Naive thymus-derived CD4-positive, alpha-beta T cell (primary cell): ENCODE measurements at regions of chr3 and their contacts with region 1.

Region 1: DNA sequence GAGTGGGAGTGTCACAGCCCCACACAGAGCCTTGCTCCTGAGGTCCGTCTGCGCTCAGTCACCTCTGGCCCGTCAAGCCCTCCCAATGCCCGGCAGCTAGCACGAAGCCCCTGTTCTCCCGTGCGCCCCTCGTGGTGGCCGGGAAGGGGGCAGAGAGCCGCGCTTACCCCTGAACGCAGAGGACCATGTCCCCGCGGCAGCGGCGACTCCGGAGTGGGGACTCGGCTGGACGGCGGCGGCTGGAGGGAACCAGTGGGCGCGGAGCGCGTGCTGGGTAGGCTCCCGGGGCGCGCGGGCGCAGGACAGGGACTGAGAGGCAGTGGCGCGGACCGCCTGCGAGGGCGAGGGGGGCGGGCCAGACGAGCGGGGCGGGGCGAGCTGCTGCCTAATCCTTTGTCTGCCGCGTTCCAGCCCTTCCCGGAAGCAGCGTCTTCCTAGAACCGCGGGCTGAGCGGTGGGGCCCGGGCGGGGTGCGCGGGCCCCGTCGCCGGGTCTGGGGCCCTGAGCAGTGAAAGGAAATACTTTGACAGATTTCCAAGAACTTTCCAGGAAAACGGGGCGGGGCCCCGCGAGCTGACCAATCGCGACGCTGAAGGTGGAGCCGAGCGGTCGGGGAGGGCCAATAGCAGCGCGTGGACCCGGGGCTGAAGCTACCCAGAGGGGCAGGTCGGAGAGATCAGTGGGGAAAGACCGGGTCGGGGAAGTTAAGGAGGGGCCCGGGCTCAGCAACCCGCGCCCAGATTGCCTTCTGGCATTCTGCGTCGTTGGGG is at the start of gene CISH:
- DNase-seq: peak; percentile 86 to 98 (median 89)
- ATAC-seq: peak; percentile 77
- H3K4me3 ChIP-seq: peak within 1 kb of the TSS; percentile 93
- H3K4me3 Mint-ChIP-seq: peak within 1 kb of the TSS; percentile 83 to 98 (median 92)
- H3K27ac ChIP-seq: peak within 1 kb of the TSS; percentile 93
- H3K27ac Mint-ChIP-seq: peak within 1 kb of the TSS; percentile 89 to 96 (median 94)
- H3K4me1 ChIP-seq: peaks cover 55 to 56% of the 10 kb centered on the region in 2 donors
- H3K4me1 Mint-ChIP-seq: peaks cover 53 to 80% (median 64%) of the 10 kb centered on the region in 7 donors
- H3K27me3 ChIP-seq: no peaks in the 10 kb centered on the region
- H3K27me3 Mint-ChIP-seq: peaks cover 0 to 2% (median 0%) of the 10 kb centered on the region in 5 donors
- total RNA-seq, gene CISH: 10.9 to 486 (median 28.5) TPM

Region 2: GRCh38 chr3:50146316-50146901 is 465.2 kb before region 1 on chr3:
- CTCF ChIA-PET with region 1: no interaction called
- POLR2A ChIA-PET with region 1: no interaction called
- intact Hi-C with region 1: no loop called
- DNase-seq: no peak
- ATAC-seq: no peak
- H3K4me3 ChIP-seq: no peak overlapping the region
- H3K4me3 Mint-ChIP-seq: no peak overlapping the region
- H3K27ac ChIP-seq: no peak overlapping the region
- H3K27ac Mint-ChIP-seq: no peak overlapping the region
- H3K4me1 ChIP-seq: no peaks in the 10 kb centered on the region
- H3K4me1 Mint-ChIP-seq: no peaks in the 10 kb centered on the region
- H3K27me3 ChIP-seq: no peaks in the 10 kb centered on the region
- H3K27me3 Mint-ChIP-seq: peaks cover 0 to 8% (median 0%) of the 10 kb centered on the region in 5 donors

Region 3: DNA sequence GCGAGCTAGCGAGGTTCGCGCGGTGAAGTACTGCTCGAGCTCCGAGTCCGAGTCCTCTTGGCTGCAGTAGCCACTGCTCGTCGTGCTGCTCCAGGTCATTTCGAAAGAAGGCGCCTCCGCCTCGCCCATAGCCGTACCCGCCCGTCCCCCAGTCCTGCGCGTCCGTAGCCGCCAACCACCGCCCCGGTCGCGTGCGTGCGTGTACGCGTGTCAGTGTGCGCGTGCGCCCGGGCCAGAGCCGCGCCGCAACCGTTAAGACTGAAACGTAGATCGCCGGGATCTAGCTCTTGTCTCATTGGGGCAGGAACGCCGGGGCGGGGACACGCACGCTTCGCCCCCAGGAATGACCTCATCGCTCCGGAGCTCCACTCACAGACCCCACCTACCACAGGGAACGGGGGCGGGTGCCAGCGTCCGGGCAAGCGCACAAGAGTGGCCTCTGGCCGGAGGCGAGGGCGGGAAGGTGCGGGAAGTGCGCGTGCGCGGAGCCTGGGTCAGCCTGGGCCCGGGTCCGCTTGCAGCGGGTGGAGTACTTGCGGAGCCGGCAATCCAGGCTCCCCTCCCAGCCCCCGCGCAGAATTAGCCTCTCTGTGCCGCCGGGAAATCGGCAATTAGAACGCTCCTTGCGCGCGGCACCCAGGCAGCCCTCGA is 274.3 kb before region 1 on chr3:
- CTCF ChIA-PET with region 1: interaction called, 4 read pairs
- POLR2A ChIA-PET with region 1: interaction called, 3 read pairs
- intact Hi-C with region 1: loop called in 1 of 2 experiments (anchors 2 kb)
- DNase-seq: peak; percentile 83 to 98 (median 91)
- ATAC-seq: peak; percentile 88
- H3K4me3 ChIP-seq: peak overlapping the region; percentile 83
- H3K4me3 Mint-ChIP-seq: peak overlapping the region; percentile 92 to 97 (median 95)
- H3K27ac ChIP-seq: peak overlapping the region; percentile 92
- H3K27ac Mint-ChIP-seq: peak overlapping the region; percentile 92 to 97 (median 96)
- H3K4me1 ChIP-seq: peaks cover 43 to 58% of the 10 kb centered on the region in 2 donors
- H3K4me1 Mint-ChIP-seq: peaks cover 35 to 73% (median 68%) of the 10 kb centered on the region in 7 donors
- H3K27me3 ChIP-seq: no peaks in the 10 kb centered on the region
- H3K27me3 Mint-ChIP-seq: peaks cover 0 to 3% (median 0%) of the 10 kb centered on the region in 5 donors

Region 4: GRCh38 chr3:50503504-50504342 is 107.9 kb before region 1 on chr3 and contains the start of gene CACNA2D2:
- CTCF ChIA-PET with region 1: no interaction called
- POLR2A ChIA-PET with region 1: no interaction called
- intact Hi-C with region 1: loop called in 1 of 2 experiments (anchors 5 kb)
- DNase-seq: peak; percentile 54 to 79 (median 74)
- ATAC-seq: peak; percentile 94
- H3K4me3 ChIP-seq: peak within 1 kb of the TSS; percentile 44
- H3K4me3 Mint-ChIP-seq: peak within 1 kb of the TSS; percentile 37 to 85 (median 76)
- H3K27ac ChIP-seq: peak within 1 kb of the TSS; percentile 45
- H3K27ac Mint-ChIP-seq: peak within 1 kb of the TSS in 5 of 9 donors; percentile 19 to 71 (median 43)
- H3K4me1 ChIP-seq: peaks cover 0 to 5% of the 10 kb centered on the region in 2 donors
- H3K4me1 Mint-ChIP-seq: peaks cover 0 to 15% (median 10%) of the 10 kb centered on the region in 7 donors
- H3K27me3 ChIP-seq: peaks cover 0 to 5% of the 10 kb centered on the region in 2 donors
- H3K27me3 Mint-ChIP-seq: peaks cover 11 to 56% (median 21%) of the 10 kb centered on the region in 5 donors
- total RNA-seq, gene CACNA2D2: 0.97 to 6.2 (median 2.5) TPM

Region 5: GRCh38 chr3:50627407-50628051 is 15.9 kb after region 1 on chr3:
- CTCF ChIA-PET with region 1: interaction called, 14 read pairs
- POLR2A ChIA-PET with region 1: no interaction called
- intact Hi-C with region 1: loop called in 1 of 2 experiments (anchors 2 kb)
- DNase-seq: no peak
- ATAC-seq: peak; percentile 90
- H3K4me3 ChIP-seq: no peak overlapping the region
- H3K4me3 Mint-ChIP-seq: peak overlapping the region in 5 of 10 donors; percentile 19 to 45 (median 39)
- H3K27ac ChIP-seq: no peak overlapping the region
- H3K27ac Mint-ChIP-seq: peak overlapping the region in 8 of 9 donors; percentile 1 to 75 (median 64)
- H3K4me1 ChIP-seq: peaks cover 59 to 79% of the 10 kb centered on the region in 2 donors
- H3K4me1 Mint-ChIP-seq: peaks cover 74 to 100% (median 94%) of the 10 kb centered on the region in 7 donors
- H3K27me3 ChIP-seq: no peaks in the 10 kb centered on the region
- H3K27me3 Mint-ChIP-seq: no peaks in the 10 kb centered on the region

Region 6: GRCh38 chr3:51190199-51190839 is 578.7 kb after region 1 on chr3:
- CTCF ChIA-PET with region 1: no interaction called
- POLR2A ChIA-PET with region 1: no interaction called
- intact Hi-C with region 1: loop called in 1 of 2 experiments (anchors 1 kb)
- DNase-seq: peak in 4 of 9 donors; percentile 5 to 23 (median 8)
- ATAC-seq: no peak
- H3K4me3 ChIP-seq: no peak overlapping the region
- H3K4me3 Mint-ChIP-seq: no peak overlapping the region
- H3K27ac ChIP-seq: no peak overlapping the region
- H3K27ac Mint-ChIP-seq: peak overlapping the region in 1 of 9 donors; percentile 30
- H3K4me1 ChIP-seq: no peaks in the 10 kb centered on the region
- H3K4me1 Mint-ChIP-seq: peaks cover 6 to 45% (median 13%) of the 10 kb centered on the region in 7 donors
- H3K27me3 ChIP-seq: no peaks in the 10 kb centered on the region
- H3K27me3 Mint-ChIP-seq: peaks cover 0 to 3% (median 0%) of the 10 kb centered on the region in 5 donors

Region 7: DNA sequence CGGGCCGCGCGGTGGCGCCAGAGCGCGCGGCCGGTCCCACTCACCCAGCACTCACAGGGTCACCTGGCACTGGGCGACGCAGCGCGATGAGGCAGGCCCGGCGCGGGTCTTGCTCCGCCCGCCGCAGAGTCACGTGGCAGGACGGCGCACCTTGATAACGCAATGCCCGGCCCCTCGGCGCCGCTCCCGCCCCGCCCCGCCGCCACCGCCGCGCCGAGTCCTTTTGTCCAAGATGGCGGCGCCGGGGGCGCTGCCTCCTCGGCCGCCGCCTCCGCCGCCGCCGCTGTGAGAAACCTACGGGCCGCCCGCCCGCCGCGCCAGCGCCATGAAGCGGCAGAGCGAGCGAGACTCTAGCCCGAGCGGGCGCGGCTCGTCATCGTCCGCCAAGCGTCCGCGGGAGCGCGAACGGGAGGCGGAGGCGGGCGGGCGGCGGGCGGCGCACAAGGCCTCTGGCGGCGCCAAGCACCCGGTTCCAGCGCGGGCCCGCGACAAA is 779.5 kb after region 1 on chr3 and contains the start of gene RBM15B:
- CTCF ChIA-PET with region 1: interaction called, 12 read pairs
- POLR2A ChIA-PET with region 1: interaction called, 16 read pairs
- intact Hi-C with region 1: loop called (anchors 1 kb)
- DNase-seq: peak; percentile 94 to 98 (median 96)
- ATAC-seq: peak; percentile 95
- H3K4me3 ChIP-seq: peak within 1 kb of the TSS; percentile 52
- H3K4me3 Mint-ChIP-seq: peak within 1 kb of the TSS; percentile 76 to 89 (median 83)
- H3K27ac ChIP-seq: peak within 1 kb of the TSS; percentile 90
- H3K27ac Mint-ChIP-seq: peak within 1 kb of the TSS; percentile 79 to 91 (median 88)
- H3K4me1 ChIP-seq: peaks cover 46 to 53% of the 10 kb centered on the region in 2 donors
- H3K4me1 Mint-ChIP-seq: peaks cover 35 to 75% (median 67%) of the 10 kb centered on the region in 7 donors
- H3K27me3 ChIP-seq: no peaks in the 10 kb centered on the region
- H3K27me3 Mint-ChIP-seq: no peaks in the 10 kb centered on the region
- total RNA-seq, gene RBM15B: 29.9 to 40.6 (median 31.3) TPM

Region 8: DNA sequence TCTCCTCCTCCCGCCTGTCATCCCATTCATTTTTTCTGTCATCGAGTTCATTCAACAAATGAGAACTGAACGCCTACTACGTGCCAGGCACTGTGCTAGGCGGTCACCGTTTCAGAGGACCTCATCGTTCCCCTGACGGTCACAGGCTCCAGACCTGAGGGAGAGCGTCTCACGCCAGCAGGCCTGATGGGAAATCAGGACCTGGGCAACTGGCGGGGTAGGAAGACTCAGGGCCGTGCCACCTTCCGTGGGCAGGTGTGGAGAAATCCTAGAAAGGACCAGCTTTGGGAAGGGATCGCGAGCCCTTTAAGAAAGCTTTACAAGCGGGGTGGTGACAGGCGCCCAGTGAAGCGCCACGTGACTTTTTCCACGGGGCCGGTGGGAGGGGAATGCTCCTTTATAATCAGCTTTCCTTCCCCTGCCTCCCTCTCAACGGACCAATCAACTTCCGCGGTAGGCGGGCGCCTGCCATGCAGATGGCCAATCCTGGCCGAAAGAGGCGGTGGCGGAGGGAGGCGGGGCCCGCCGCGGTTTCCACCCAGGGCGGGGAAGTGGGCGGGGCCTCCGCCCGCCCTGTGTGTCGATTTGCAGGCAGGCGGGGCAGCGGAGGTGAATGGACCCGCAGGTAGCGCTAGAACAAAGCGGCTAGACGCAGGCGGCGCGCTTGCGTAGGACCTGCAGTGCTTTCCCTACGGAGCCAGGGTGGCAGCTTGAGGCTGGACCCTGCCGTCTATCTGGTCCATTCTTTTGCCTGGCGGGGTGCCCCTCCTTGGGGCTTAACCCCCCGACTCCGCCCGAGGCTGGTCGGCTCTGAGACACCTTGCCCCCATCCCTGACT is 1445.5 kb after region 1 on chr3:
- CTCF ChIA-PET with region 1: no interaction called
- POLR2A ChIA-PET with region 1: no interaction called
- intact Hi-C with region 1: loop called in 1 of 2 experiments (anchors 10 kb)
- DNase-seq: peak; percentile 90 to 100 (median 99)
- ATAC-seq: peak; percentile 93
- H3K4me3 ChIP-seq: peak overlapping the region; percentile 92
- H3K4me3 Mint-ChIP-seq: peak overlapping the region; percentile 90 to 97 (median 94)
- H3K27ac ChIP-seq: peak overlapping the region; percentile 79
- H3K27ac Mint-ChIP-seq: peak overlapping the region; percentile 78 to 97 (median 93)
- H3K4me1 ChIP-seq: peaks cover 34 to 35% of the 10 kb centered on the region in 2 donors
- H3K4me1 Mint-ChIP-seq: peaks cover 26 to 39% (median 26%) of the 10 kb centered on the region in 7 donors
- H3K27me3 ChIP-seq: no peaks in the 10 kb centered on the region
- H3K27me3 Mint-ChIP-seq: peaks cover 0 to 4% (median 0%) of the 10 kb centered on the region in 5 donors